ENCODE measurements at regions of chr11 and their contacts with region 1.

Region 1: GRCh38 chr11:46308631-46309419 is 31.4 kb downstream of the CREB3L1 start:
- DNase-seq: peak; percentile 83 to 88 (median 84)
- ATAC-seq: peak; percentile 92
- H3K4me3 ChIP-seq: no peak overlapping the region
- H3K27ac ChIP-seq: peak overlapping the region; percentile 75; the same call in 2 of the 3 replicates
- H3K4me1 ChIP-seq: peaks cover 17 to 45% of the 10 kb centered on the region in 2 experiments
- H3K27me3 ChIP-seq: no peaks in the 10 kb centered on the region
- CTCF ChIP-seq: peak; percentile 87 to 96 (median 91)
- EP300 ChIP-seq: no peak
- POLR2A ChIP-seq: no peak
- RAD21 ChIP-seq: peak; percentile 84 to 90

Region 2: DNA sequence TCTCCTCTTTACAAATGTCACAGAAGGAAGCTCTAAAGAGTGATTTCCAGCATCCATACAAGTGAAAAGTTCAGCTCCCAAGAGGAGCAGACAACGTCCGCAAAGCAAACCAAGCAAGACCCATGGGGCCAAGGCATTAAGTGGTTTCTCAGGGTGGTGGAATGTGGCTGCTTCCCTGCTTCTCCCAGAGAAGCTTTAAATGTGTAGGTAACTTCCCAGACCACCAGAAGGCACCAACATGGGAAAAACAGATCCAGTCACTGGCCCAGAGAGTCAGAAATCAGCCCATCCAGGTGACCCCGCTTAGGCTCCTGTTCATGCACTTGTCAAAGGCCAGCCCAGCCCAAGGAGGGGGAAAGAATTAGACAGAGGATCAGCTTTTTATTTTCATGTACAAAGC is 174.3 kb before region 1 on chr11:
- CTCF ChIA-PET with region 1: no interaction called
- POLR2A ChIA-PET with region 1: no interaction called
- in situ Hi-C with region 1: loop called (anchors 5 kb)
- intact Hi-C with region 1: no loop called
- DNase-seq: no peak
- ATAC-seq: no peak
- H3K4me3 ChIP-seq: no peak overlapping the region
- H3K27ac ChIP-seq: no peak overlapping the region
- H3K4me1 ChIP-seq: no peaks in the 10 kb centered on the region; a peak in 1 of 5 replicates
- H3K27me3 ChIP-seq: no peaks in the 10 kb centered on the region
- CTCF ChIP-seq: 0 out of 6 replicates have a peak, but pooled peaks of 1 of the 3 experiments have one; percentile 1
- EP300 ChIP-seq: no peak
- POLR2A ChIP-seq: no peak
- RAD21 ChIP-seq: no peak